IMR-90 (cell line): ENCODE measurements at regions of chr5 and their contacts with region 1.

Region 1: DNA sequence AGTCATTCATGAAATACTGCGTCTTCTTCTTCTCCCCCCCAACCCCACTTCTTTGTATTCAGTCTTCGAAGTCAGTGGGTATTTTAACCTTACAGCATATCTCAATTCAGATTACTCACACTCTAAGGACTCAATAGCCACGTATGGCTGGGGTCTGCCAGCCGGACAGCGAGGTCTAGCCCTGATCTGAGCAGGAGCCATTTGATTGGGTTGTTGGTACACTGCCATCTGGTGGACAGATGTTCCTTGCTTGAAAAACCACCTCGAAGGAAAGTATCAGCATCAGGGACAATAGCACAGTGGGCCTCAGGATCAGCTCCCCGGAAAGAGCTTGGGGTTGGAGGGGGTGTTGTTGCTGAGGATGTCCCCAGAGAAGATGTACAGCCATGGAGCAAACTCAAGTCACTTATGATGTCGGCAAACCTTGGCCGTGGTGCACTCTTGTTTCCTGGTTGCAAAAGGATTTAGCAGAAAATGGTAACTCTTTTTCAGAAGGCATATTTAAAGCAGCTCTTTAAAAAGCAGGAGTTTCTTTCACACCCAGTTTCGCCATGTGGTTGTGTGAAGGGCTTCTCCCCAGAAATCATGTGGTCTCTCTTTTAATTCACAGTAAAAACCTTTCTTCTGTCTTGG is 31.7 kb upstream of the KCNMB1 start:
- DNase-seq: peak; percentile 67
- ATAC-seq: peak; percentile 90
- H3K4me3 ChIP-seq: no peak overlapping the region
- H3K27ac ChIP-seq: no peak overlapping the region
- H3K4me1 ChIP-seq: no peaks in the 10 kb centered on the region
- H3K27me3 ChIP-seq: peaks cover 7% of the 10 kb centered on the region
- CTCF ChIP-seq: peak; percentile 62
- POLR2A ChIP-seq: no peak
- RAD21 ChIP-seq: peak; percentile 48

Region 2: DNA sequence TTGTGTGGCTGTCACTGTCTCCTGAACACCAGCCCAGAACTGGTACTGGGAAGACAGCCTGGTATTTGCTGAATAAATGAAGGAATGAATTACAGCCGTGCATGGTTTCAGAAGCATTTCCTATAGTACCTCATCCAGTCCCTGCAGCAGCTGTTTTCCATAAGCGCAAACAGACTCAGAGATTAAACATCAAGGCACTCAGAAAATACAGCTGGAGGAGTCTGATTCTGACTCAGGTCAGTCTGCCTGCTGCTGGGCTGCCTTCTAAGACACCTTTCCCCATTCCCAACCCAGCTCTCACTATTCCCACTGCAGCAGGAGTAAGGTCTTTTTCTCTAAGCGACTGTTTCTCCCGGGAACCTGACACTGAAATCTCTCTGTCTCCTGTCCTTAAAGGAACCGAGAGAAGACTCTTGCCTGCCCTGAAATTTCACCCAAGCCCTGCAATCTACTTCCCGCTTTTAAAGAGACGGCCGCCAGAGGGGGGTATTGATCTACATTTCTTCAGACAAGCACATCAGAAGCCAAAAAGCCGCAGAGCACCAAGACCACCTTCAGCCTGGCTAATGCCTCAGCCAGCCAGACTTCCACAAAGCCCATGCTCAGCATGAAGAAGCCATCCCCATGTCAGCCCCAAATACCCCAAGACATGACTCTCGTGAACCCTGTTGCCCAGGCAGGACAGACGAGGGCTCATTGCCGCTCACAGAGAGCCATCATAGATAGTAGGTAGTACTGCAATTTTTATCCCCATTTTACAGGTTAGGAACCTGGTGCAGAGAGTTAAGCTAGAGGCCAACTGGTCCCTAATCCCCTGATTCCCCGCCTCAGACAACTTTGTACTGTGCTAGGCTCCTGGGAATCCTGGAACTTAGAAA is 320.6 kb before region 1 on chr5:
- CTCF ChIA-PET with region 1: no interaction called
- POLR2A ChIA-PET with region 1: no interaction called
- dilution Hi-C with region 1: no loop called
- in situ Hi-C with region 1: loop called (anchors 5 kb)
- intact Hi-C with region 1: loop called (anchors 1 kb)
- DNase-seq: peak; percentile 69
- ATAC-seq: peak; percentile 93
- H3K4me3 ChIP-seq: no peak overlapping the region
- H3K27ac ChIP-seq: no peak overlapping the region
- H3K4me1 ChIP-seq: no peaks in the 10 kb centered on the region
- H3K27me3 ChIP-seq: no peaks in the 10 kb centered on the region
- CTCF ChIP-seq: peak; percentile 71
- POLR2A ChIP-seq: no peak
- RAD21 ChIP-seq: peak; percentile 70

Region 3: DNA sequence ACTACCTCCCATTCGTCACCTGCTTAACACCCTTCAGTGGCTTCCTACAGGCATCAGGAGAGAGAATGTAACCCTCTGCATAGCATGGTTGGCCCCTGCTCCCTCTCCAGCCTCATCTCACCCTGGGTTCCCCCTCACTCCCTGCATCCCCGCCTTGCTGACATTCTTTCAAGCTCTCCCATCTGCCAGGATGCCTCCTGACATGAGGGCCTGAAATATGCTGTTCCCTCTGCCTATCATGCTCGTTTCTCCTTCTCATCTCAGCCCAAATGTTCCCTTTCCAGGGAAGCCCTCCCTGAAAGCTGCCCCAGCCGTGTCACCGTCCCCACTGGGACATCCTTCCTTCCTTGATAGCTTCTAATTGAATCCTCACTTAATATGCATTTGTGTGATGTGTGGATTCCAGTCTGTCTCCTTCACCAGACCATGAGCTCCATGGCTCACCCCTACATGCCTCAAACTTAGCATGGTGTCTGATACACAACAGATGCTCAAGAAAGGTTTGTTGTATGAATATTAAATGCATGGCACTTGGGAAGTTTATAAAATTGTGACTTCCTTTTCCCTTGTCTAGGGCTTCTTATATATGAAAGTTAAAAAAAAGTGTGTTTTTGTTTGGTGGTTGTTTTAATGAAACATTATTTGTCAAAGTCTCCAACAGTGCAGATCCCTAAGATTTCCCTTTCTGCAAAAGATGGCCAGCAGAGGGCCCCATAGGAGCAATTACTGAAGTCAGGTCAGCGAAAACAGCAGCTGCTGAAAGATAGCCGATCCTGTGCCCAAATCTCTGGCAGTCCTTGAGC is 195.4 kb before region 1 on chr5:
- CTCF ChIA-PET with region 1: interaction called, 10 read pairs
- POLR2A ChIA-PET with region 1: no interaction called
- dilution Hi-C with region 1: no loop called
- in situ Hi-C with region 1: loop called (anchors 10 kb)
- intact Hi-C with region 1: loop called (anchors 1 kb)
- DNase-seq: peak; percentile 39
- ATAC-seq: peak; percentile 90
- H3K4me3 ChIP-seq: no peak overlapping the region
- H3K27ac ChIP-seq: no peak overlapping the region
- H3K4me1 ChIP-seq: no peaks in the 10 kb centered on the region
- H3K27me3 ChIP-seq: no peaks in the 10 kb centered on the region
- CTCF ChIP-seq: peak; percentile 70
- POLR2A ChIP-seq: no peak
- RAD21 ChIP-seq: peak; percentile 60

Region 4: GRCh38 chr5:170267431-170268152 is 153.3 kb before region 1 on chr5:
- CTCF ChIA-PET with region 1: interaction called, 3 read pairs
- POLR2A ChIA-PET with region 1: no interaction called
- dilution Hi-C with region 1: no loop called
- in situ Hi-C with region 1: no loop called
- intact Hi-C with region 1: loop called (anchors 1 kb)
- DNase-seq: peak; percentile 62
- ATAC-seq: peak; percentile 89
- H3K4me3 ChIP-seq: no peak overlapping the region
- H3K27ac ChIP-seq: no peak overlapping the region
- H3K4me1 ChIP-seq: no peaks in the 10 kb centered on the region
- H3K27me3 ChIP-seq: peaks cover 3% of the 10 kb centered on the region
- CTCF ChIP-seq: peak; percentile 72
- POLR2A ChIP-seq: no peak
- RAD21 ChIP-seq: peak; percentile 52

Region 5: GRCh38 chr5:170338933-170339779 is 81.7 kb before region 1 on chr5:
- CTCF ChIA-PET with region 1: no interaction called
- POLR2A ChIA-PET with region 1: no interaction called
- dilution Hi-C with region 1: no loop called
- in situ Hi-C with region 1: no loop called
- intact Hi-C with region 1: no loop called
- DNase-seq: no peak
- ATAC-seq: no peak
- H3K4me3 ChIP-seq: no peak overlapping the region
- H3K27ac ChIP-seq: no peak overlapping the region
- H3K4me1 ChIP-seq: no peaks in the 10 kb centered on the region
- H3K27me3 ChIP-seq: no peaks in the 10 kb centered on the region
- CTCF ChIP-seq: no peak
- POLR2A ChIP-seq: no peak
- RAD21 ChIP-seq: no peak

Region 6: DNA sequence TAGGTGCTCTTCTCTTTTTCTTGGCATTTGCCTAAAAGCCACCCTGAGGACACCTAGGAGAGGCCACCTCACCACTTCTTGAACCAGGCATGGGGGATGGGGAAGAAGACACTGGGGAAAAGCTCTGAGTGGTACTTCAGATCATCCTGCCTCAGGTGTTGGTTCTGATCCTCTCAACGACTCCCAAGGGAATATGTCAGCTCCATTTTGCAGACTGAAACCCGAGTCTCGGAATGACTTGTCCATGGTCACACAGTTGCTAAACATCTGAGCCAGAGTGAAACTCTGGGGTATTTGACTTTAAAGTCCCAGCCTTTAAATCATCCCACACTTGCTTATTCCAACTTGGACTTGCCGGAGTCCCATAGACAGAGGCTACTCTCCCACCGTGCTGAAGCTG is 242.1 kb after region 1 on chr5:
- CTCF ChIA-PET with region 1: no interaction called
- POLR2A ChIA-PET with region 1: no interaction called
- dilution Hi-C with region 1: no loop called
- in situ Hi-C with region 1: no loop called
- intact Hi-C with region 1: no loop called
- DNase-seq: no peak
- ATAC-seq: no peak
- H3K4me3 ChIP-seq: no peak overlapping the region
- H3K27ac ChIP-seq: no peak overlapping the region
- H3K4me1 ChIP-seq: no peaks in the 10 kb centered on the region
- H3K27me3 ChIP-seq: no peaks in the 10 kb centered on the region; the same call in 1 of the 2 replicates
- CTCF ChIP-seq: no peak
- POLR2A ChIP-seq: no peak
- RAD21 ChIP-seq: no peak